A673 (cell line): ENCODE measurements at regions of chr12 and their contacts with region 1.

Region 1: DNA sequence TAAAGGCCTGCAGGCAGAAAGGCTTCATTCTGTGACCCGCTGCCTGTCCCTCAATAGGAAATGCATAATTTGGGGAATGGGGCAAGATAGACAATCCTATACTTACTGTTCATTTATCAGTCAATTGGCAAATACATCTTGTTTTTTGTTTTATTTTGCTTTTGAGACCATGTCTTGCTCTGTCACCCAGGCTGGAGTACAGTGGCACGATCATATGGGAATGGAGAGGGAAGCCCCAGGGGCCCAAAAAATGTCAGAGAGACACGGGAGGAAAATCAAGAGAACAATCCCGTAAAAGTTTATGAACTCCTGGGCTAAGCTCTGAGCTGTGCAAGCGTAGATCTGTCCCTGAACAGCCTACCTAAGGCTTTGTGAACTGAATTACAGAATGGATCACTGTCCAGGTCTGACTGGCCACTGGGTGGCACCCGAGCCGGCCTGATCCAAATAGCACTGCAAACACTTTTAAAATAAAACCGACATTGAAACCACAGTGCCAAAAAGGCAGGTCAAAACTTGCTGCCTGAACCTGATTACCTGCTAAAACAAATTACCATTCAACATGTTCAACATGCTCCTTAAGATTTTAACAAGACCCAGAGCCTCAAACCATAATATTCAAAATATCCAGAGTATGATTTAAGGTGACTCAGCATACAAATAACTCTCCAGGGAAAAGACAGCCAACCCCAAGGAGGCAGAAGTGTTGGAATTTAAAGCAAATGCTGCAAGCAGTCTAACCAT is 11.8 kb downstream of the COPS7A start:
- DNase-seq: peak; percentile 63
- H3K4me3 ChIP-seq: no peak overlapping the region
- H3K27ac ChIP-seq: peak overlapping the region; percentile 26
- H3K4me1 ChIP-seq: peaks cover 7% of the 10 kb centered on the region
- H3K27me3 ChIP-seq: no peaks in the 10 kb centered on the region
- CTCF ChIP-seq: peak; percentile 82

Region 2: DNA sequence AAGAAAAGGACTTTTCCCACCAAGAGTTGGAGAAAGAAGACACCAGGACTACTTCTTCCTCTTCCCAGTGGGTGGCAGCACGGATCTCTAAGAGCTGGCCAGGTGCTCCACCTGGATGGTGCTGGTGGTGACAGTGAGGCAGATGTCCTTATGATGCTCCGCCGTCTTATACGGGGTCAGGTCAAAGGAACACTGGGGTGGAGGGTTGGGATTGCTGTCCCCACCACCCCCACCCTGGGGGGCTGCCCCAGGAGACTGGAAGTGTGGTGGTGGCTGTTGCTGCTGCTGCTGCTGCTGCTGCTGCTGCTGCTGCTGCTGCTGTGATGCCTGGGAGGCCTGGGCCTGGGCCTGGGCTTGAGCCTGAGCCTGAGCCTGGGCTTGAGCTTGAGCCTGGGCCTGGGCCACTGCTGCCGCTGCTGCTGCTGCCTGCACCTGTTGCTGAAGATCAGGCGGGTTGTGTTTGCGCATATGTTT is 68.0 kb before region 1 on chr12:
- CTCF ChIA-PET with region 1: no interaction called
- POLR2A ChIA-PET with region 1: no interaction called
- intact Hi-C with region 1: no loop called
- DNase-seq: no peak
- H3K4me3 ChIP-seq: no peak overlapping the region
- H3K27ac ChIP-seq: no peak overlapping the region
- H3K4me1 ChIP-seq: peaks cover 6% of the 10 kb centered on the region
- H3K27me3 ChIP-seq: no peaks in the 10 kb centered on the region
- CTCF ChIP-seq: 0 out of 2 replicates have a peak, but pooled peaks have one; percentile 21

Region 3: DNA sequence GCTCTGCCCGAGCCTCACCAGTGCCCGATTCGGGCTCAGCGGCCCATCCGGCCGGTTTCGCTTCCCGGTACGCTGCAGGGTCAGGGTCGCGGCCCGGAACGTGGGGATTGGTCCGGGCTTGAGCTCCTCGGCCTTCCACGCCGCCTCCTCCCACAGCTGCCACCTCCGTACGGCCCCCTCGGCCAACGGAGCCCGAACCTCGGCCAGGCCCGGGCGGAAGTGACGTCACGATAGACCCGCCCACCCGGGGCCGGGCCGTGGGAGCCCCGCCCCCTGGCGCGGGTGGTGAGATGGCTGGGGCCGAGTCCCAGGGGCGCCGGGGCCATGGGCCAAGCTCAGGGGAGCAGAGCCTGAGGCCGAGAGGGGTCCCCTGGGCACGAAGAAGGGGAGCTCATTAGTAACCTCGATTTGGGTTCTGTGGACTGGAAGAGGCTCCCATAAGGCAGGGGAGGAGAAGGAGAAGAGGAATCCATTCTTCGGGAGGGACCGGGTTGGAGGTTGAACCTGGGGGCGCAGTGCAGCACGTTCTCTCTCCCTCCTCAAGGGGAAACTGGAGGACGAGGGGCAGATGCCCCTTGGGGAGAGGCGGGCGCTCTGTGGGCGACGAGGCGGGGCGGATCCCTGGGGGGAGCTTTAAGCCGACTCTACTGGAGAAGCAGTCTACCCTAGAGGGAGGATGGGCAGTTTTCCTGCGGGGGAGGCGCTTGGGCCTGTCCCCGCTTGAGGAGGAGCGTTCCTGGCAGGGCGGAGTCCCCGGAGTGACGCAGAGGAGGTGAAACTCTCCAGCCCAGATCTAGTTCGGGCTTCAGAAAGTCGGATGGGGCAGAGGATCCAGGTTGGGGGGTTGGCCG is 17.5 kb after region 1 on chr12 and contains the start of gene MLF2:
- CTCF ChIA-PET with region 1: no interaction called
- POLR2A ChIA-PET with region 1: no interaction called
- intact Hi-C with region 1: no loop called
- DNase-seq: peak; percentile 99
- H3K4me3 ChIP-seq: peak within 1 kb of the TSS; percentile 100
- H3K27ac ChIP-seq: peak within 1 kb of the TSS; percentile 99
- H3K4me1 ChIP-seq: peaks cover 18% of the 10 kb centered on the region
- H3K27me3 ChIP-seq: no peaks in the 10 kb centered on the region
- CTCF ChIP-seq: peak; percentile 98
- total RNA-seq, gene MLF2: 242 and 254 TPM in 2 replicates

Region 4: GRCh38 chr12:6778574-6779550 is 43.2 kb after region 1 on chr12:
- CTCF ChIA-PET with region 1: no interaction called
- POLR2A ChIA-PET with region 1: no interaction called
- intact Hi-C with region 1: loop called (anchors 5 kb)
- DNase-seq: peak; percentile 93
- H3K4me3 ChIP-seq: peak overlapping the region; percentile 30
- H3K27ac ChIP-seq: peak overlapping the region; percentile 29
- H3K4me1 ChIP-seq: peaks cover 8% of the 10 kb centered on the region
- H3K27me3 ChIP-seq: no peaks in the 10 kb centered on the region
- CTCF ChIP-seq: peak; percentile 96